Activated CD8-positive, alpha-beta T cell treated with anti-CD3 and anti-CD28 coated beads for 36 hours (primary cell): ENCODE measurements at regions of chr11 and their contacts with region 1.

Region 1: DNA sequence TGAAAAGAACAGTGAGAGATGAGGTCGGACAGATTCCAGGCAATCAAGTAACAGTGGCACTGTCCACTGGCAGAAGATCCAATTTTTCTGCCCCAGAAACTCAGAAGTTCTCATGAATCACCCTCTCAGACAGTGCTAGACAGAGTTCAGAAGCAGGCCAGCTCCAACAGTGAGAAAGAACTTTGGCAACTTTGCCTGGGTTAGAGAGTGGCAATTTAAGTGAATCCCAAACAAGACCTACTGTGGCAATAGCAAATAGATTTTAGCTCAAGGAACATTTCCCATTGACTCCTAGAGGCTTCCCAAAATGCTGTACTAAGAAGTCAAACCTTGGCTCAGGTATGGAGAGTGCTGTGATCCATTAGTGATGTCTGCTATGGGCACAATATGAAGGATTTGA is 12.3 kb downstream of the CD44 start:
- DNase-seq: no peak
- ATAC-seq: no peak
- H3K4me3 Mint-ChIP-seq: no peak overlapping the region
- H3K27ac Mint-ChIP-seq: peak overlapping the region; percentile 97
- H3K4me1 Mint-ChIP-seq: peaks cover 96% of the 10 kb centered on the region
- H3K27me3 Mint-ChIP-seq: no peaks in the 10 kb centered on the region
- CTCF ChIP-seq: no peak

Region 2: DNA sequence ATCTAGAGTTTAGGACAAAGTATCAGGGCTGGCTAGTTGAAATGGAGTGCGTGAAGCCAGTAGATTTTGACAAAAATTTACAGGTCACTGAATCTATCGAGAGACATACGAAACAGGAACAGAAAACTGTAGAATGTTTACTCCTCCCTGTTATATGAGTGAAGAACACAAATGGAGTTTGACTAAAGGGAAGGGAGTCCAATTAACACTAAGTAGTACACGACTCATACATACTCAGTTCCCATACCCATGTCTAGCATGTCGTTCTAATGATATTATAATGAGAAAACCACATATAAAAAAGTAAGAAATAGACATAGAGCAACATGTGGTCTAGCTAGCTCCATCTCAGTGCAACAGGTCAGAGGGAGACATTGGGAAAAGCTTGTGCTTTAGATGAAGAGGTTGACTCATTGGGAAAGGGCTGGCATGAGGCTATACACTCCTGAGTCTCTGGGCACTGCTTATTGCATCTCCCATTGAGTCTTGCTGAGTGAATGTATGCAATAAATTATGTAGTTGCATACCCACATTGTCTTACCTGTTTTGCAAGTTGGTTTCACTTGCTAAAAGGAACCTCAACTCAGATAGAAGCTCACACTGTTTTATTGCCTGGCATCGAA is 31.2 kb after region 1 on chr11:
- CTCF ChIA-PET with region 1: interaction called, 6 read pairs
- POLR2A ChIA-PET with region 1: interaction called, 68 read pairs
- intact Hi-C with region 1: no loop called
- DNase-seq: no peak
- ATAC-seq: no peak
- H3K4me3 Mint-ChIP-seq: no peak overlapping the region
- H3K27ac Mint-ChIP-seq: peak overlapping the region; percentile 87
- H3K4me1 Mint-ChIP-seq: peaks cover 85% of the 10 kb centered on the region
- H3K27me3 Mint-ChIP-seq: no peaks in the 10 kb centered on the region
- CTCF ChIP-seq: no peak